ENCODE measurements at regions of chr15 and their contacts with region 1.

Region 1: DNA sequence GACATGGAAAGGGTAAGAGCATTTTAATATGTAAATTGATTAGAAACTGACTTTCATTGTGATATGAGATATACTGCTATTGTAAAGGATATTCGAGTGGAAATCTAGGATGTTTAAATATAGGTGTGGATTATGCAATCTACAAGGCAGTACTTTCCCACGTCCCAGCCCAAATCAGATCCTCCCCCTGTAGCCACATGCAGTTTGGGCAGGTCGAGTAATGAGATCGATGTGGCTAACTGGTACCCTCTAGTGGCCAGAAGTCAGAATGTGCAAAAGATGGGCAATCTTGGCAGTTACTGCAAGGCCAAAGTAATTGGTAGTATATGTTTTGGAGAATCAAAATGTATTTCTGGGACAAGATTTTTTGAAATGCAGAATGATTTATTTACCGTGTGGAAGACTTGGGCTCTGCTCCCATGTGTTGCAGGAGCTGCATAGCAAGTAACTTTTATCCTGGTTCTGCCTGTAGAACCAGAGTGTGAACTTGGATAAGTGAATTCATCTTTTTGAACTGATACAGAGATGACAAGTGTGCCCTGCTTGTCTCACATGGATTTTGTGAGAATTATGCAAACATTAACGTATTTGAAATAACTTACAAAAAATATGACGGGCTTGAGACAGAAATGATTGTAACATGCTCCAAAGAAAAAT is 94.5 kb upstream of the ADAMTSL3 start:
- DNase-seq: peak; percentile 72
- ATAC-seq: peak; percentile 90
- H3K4me3 Mint-ChIP-seq: no peak overlapping the region
- H3K27ac Mint-ChIP-seq: no peak overlapping the region
- H3K4me1 Mint-ChIP-seq: 0 out of 2 replicates have a peak, but pooled peaks cover 2% of the 10 kb centered on the region
- H3K27me3 Mint-ChIP-seq: no peaks in the 10 kb centered on the region
- CTCF ChIP-seq: peak; percentile 70

Region 2: GRCh38 chr15:83436458-83437158 is 122.8 kb before region 1 on chr15:
- CTCF ChIA-PET with region 1: interaction called, 13 read pairs
- POLR2A ChIA-PET with region 1: no interaction called
- DNase-seq: no peak
- ATAC-seq: peak; percentile 88
- H3K4me3 Mint-ChIP-seq: no peak overlapping the region
- H3K27ac Mint-ChIP-seq: no peak overlapping the region
- H3K4me1 Mint-ChIP-seq: peaks cover 8% of the 10 kb centered on the region
- H3K27me3 Mint-ChIP-seq: no peaks in the 10 kb centered on the region
- CTCF ChIP-seq: peak; percentile 42

Region 3: GRCh38 chr15:83571820-83572707 is 12.6 kb after region 1 on chr15:
- CTCF ChIA-PET with region 1: interaction called, 14 read pairs
- POLR2A ChIA-PET with region 1: no interaction called
- DNase-seq: no peak
- ATAC-seq: peak; percentile 79
- H3K4me3 Mint-ChIP-seq: no peak overlapping the region
- H3K27ac Mint-ChIP-seq: no peak overlapping the region
- H3K4me1 Mint-ChIP-seq: no peaks in the 10 kb centered on the region
- H3K27me3 Mint-ChIP-seq: no peaks in the 10 kb centered on the region
- CTCF ChIP-seq: peak; percentile 34; the same call in 1 of the 2 replicates